ENCODE measurements at regions of chr10 and their contacts with region 1.

Region 1: DNA sequence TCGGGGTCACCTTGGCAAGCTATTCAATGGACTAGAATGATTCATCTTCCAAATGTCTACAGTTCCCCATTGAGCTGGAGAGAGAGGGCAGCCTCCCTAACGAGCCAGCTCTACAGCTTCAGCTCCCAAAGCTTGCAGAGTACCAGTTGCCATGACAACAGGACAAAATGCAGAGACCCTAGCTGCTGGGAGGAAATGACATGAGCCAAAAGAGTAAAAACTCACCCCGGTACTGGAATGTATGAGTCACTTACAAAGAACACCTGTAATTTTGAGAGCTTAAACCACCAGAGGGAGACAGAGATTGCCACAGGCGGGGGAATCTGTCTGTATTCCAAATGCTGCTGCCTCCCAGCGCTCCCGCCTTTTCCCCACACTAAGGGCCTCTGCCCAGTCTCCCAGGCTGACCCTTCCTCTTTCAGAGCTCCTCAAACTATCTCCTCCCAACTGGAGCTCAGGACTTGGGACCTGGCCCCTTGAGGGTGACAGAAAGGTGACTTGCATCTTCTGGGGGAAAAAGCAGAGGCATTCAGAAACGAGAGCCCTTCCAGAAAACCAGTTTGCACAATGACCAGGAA is 95.5 kb downstream of the CUL2 start:
- DNase-seq: peak; percentile 86
- H3K4me3 Mint-ChIP-seq: no peak overlapping the region
- H3K27ac Mint-ChIP-seq: no peak overlapping the region
- H3K4me1 Mint-ChIP-seq: peaks cover 30% of the 10 kb centered on the region
- H3K27me3 Mint-ChIP-seq: no peaks in the 10 kb centered on the region
- CTCF ChIP-seq: peak; percentile 76

Region 2: DNA sequence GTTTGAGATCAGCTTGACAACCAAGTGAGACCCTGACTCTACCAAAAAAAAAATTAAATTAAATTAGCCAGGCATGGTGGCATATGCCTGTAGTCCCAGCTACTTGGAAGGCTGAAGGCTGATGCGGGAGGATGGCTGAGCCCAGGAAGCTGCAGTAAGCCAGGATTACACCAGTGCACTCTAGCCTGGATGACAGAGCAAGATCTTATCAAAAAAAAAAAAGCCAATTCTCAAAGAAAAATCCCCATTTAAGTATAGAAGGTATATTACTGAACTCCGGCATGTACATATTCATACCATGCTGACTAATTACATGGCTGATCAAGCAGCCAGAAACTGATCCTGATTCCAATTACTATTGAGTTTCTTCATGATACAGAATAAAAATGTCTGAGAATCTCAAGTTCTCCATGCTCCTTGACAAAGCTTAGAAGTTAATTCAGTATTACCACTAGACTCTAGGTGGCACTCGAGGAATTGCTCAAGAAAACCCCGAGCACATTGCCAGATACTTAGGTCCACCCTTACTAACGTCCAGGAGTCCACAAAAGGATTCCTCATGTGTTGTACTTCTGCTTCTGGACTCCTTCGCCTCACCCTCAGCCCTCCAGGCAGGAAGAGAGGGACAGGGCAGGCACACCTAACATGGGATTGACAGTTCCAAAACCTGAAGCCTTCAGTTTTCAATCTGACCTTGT is 328.5 kb before region 1 on chr10:
- CTCF ChIA-PET with region 1: interaction called, 10 read pairs
- POLR2A ChIA-PET with region 1: no interaction called
- intact Hi-C with region 1: loop called (anchors 1 kb)
- DNase-seq: peak; percentile 90
- H3K4me3 Mint-ChIP-seq: peak overlapping the region; percentile 57
- H3K27ac Mint-ChIP-seq: peak overlapping the region; percentile 87
- H3K4me1 Mint-ChIP-seq: peaks cover 24% of the 10 kb centered on the region
- H3K27me3 Mint-ChIP-seq: no peaks in the 10 kb centered on the region
- CTCF ChIP-seq: peak; percentile 73

Region 3: GRCh38 chr10:34916314-34916713 is 78.3 kb before region 1 on chr10:
- CTCF ChIA-PET with region 1: no interaction called
- POLR2A ChIA-PET with region 1: no interaction called
- intact Hi-C with region 1: no loop called
- DNase-seq: peak; percentile 43
- H3K4me3 Mint-ChIP-seq: no peak overlapping the region
- H3K27ac Mint-ChIP-seq: peak overlapping the region; percentile 42
- H3K4me1 Mint-ChIP-seq: peaks cover 6% of the 10 kb centered on the region
- H3K27me3 Mint-ChIP-seq: no peaks in the 10 kb centered on the region
- CTCF ChIP-seq: no peak

Region 4: GRCh38 chr10:35005868-35006267 is 11.2 kb after region 1 on chr10:
- CTCF ChIA-PET with region 1: interaction called, 24 read pairs
- POLR2A ChIA-PET with region 1: interaction called, 14 read pairs
- intact Hi-C with region 1: no loop called
- DNase-seq: peak; percentile 98
- H3K4me3 Mint-ChIP-seq: no peak overlapping the region
- H3K27ac Mint-ChIP-seq: peak overlapping the region; percentile 29
- H3K4me1 Mint-ChIP-seq: peaks cover 13% of the 10 kb centered on the region
- H3K27me3 Mint-ChIP-seq: no peaks in the 10 kb centered on the region
- CTCF ChIP-seq: no peak

Region 5: GRCh38 chr10:35027567-35027966 is 32.9 kb after region 1 on chr10:
- CTCF ChIA-PET with region 1: interaction called, 72 read pairs
- POLR2A ChIA-PET with region 1: interaction called, 5 read pairs
- intact Hi-C with region 1: loop called (anchors 1 kb)
- DNase-seq: peak; percentile 38
- H3K4me3 Mint-ChIP-seq: no peak overlapping the region
- H3K27ac Mint-ChIP-seq: no peak overlapping the region
- H3K4me1 Mint-ChIP-seq: peaks cover 5% of the 10 kb centered on the region
- H3K27me3 Mint-ChIP-seq: no peaks in the 10 kb centered on the region
- CTCF ChIP-seq: peak; percentile 44

Region 6: DNA sequence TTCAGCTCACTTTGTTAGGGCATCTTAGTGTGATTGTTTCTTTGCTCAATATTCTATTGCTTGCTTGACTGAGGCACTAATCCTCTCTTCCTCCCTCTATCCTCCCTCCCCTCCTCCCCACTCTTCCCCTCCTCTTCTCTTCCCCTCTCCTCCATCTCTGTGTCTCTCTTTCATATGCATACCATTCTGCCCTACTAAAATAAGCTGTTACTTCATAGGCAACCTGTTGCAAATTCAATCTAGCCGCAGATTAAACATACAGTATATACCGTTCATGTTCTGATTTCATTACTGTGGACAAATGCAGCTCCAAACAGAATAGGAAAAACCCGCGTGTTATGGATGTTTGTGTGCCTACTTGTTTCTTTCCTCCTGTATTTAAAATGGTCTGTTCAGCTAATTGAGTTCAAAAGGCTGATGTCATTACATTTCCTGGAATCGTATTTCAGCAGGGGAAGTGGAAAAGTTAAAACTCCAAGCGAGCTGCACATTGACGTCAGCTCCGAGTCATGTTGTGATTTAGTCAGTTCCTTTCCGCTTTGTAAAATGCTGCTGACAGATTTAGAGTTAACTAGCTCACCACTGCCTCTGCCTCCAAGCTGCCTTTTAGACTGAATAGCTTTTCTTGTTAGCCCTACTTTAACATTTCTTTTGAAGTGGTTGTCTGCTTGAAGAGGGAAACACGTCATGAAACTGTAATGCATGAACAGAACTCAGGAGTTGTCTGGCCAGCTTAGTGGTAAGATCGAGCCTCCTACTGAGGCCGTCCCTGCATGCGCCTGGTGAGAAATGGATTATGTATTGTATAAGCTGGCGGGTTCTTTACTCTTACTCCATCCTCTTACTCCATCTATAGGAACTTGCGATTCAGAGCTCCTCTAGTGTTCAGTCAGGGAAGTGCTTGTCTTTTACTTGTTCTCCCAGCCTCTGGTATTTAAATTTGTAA is 201.0 kb after region 1 on chr10:
- CTCF ChIA-PET with region 1: interaction called, 13 read pairs
- POLR2A ChIA-PET with region 1: no interaction called
- intact Hi-C with region 1: no loop called
- DNase-seq: peak; percentile 82
- H3K4me3 Mint-ChIP-seq: peak overlapping the region; percentile 76
- H3K27ac Mint-ChIP-seq: peak overlapping the region; percentile 92
- H3K4me1 Mint-ChIP-seq: peaks cover 14% of the 10 kb centered on the region
- H3K27me3 Mint-ChIP-seq: no peaks in the 10 kb centered on the region
- CTCF ChIP-seq: peak; percentile 80